ENCODE measurements at regions of chr2 and their contacts with region 1.

Region 1: GRCh38 chr2:188978291-188979081 is 4.3 kb downstream of the COL3A1 start:
- DNase-seq: no peak
- H3K4me3 Mint-ChIP-seq: peak overlapping the region; percentile 35
- H3K27ac Mint-ChIP-seq: peak overlapping the region; percentile 80
- H3K4me1 Mint-ChIP-seq: peaks cover 13% of the 10 kb centered on the region
- H3K27me3 Mint-ChIP-seq: peaks cover 4% of the 10 kb centered on the region

Region 2: DNA sequence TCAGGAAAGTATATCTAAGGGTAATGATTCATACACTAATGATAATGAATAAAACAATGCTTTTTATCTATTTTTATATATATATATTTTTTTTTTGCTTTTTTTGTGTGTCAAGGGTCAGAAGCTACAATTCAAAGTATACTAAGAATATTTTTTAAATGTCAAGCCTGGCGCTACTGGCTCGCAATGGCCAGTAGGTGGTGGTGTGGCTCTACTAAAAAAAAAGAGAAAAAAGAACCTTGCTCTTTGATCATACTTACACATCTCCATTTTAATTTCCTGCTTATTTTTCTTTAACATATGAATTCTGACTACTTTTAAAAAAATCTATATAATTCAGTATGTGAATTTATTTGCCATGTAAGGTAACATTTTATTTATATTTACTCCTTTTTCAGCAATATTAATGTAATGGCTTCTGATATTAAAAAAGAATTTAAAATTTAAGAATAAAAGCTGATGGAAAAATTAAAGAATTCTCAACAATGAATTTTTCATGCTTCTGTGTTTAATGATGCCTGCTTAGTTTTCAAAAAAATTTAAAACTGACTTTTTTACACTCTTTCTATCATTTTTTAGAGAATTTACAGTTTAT is 453.9 kb before region 1 on chr2:
- CTCF ChIA-PET with region 1: interaction called, 18 read pairs
- POLR2A ChIA-PET with region 1: no interaction called
- intact Hi-C with region 1: loop called (anchors 2 kb)
- DNase-seq: peak; percentile 22
- H3K4me3 Mint-ChIP-seq: no peak overlapping the region
- H3K27ac Mint-ChIP-seq: no peak overlapping the region
- H3K4me1 Mint-ChIP-seq: no peaks in the 10 kb centered on the region
- H3K27me3 Mint-ChIP-seq: peaks cover 3% of the 10 kb centered on the region

Region 3: DNA sequence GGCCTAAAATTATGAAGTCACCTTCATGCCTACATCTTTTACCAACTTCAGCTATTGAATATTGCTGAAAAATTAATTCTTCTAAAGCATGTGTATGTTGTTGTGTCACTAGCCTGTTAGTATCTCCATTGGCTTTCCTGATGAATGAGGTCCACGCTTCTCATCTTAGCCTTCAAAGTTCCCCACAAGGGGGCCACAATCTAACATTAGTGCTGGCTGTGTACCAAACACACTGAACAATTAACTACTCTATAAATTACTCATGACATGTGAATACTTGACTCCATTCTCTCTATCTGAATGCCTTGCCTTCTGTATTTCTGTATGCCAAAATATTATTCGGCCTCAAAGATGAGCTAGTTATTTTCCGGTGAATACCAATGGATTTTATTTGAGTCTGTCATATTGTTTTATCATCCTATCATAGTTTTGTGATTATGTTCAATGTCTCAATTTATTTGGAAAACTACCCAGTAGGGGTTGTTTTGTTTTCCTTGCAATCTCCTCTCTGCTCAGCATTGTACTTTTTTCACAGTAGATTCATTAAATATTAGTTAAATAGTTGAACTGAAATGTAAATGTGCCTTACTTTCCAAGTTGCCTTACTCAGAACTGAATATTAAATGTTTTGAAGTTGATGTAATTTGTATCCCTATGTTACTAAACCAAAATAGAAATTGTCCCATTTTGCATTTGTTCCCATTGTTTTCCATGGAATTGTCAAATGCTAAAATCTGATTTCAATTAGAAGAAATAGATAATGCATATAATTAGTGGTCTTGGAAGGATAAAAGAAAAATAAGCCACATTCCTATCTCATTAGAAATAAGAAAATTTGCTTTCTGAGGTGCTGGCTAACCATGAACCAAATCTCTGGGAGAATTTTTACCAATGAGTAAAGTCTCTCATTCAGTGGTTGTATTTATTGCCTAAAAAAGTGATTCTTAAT is 212.7 kb before region 1 on chr2:
- CTCF ChIA-PET with region 1: no interaction called
- POLR2A ChIA-PET with region 1: no interaction called
- intact Hi-C with region 1: loop called (anchors 5 kb)
- DNase-seq: no peak
- H3K4me3 Mint-ChIP-seq: no peak overlapping the region
- H3K27ac Mint-ChIP-seq: no peak overlapping the region
- H3K4me1 Mint-ChIP-seq: no peaks in the 10 kb centered on the region
- H3K27me3 Mint-ChIP-seq: no peaks in the 10 kb centered on the region

Region 4: GRCh38 chr2:188870289-188870688 is 108.2 kb before region 1 on chr2:
- CTCF ChIA-PET with region 1: no interaction called
- POLR2A ChIA-PET with region 1: no interaction called
- intact Hi-C with region 1: loop called (anchors 1 kb)
- DNase-seq: no peak
- H3K4me3 Mint-ChIP-seq: no peak overlapping the region
- H3K27ac Mint-ChIP-seq: no peak overlapping the region
- H3K4me1 Mint-ChIP-seq: peaks cover 4% of the 10 kb centered on the region
- H3K27me3 Mint-ChIP-seq: no peaks in the 10 kb centered on the region

Region 5: GRCh38 chr2:188956961-188957360 is 21.5 kb before region 1 on chr2:
- CTCF ChIA-PET with region 1: no interaction called
- POLR2A ChIA-PET with region 1: no interaction called
- intact Hi-C with region 1: loop called (anchors 1 kb)
- DNase-seq: no peak
- H3K4me3 Mint-ChIP-seq: no peak overlapping the region
- H3K27ac Mint-ChIP-seq: no peak overlapping the region
- H3K4me1 Mint-ChIP-seq: peaks cover 4% of the 10 kb centered on the region
- H3K27me3 Mint-ChIP-seq: peaks cover 3% of the 10 kb centered on the region

Region 6: DNA sequence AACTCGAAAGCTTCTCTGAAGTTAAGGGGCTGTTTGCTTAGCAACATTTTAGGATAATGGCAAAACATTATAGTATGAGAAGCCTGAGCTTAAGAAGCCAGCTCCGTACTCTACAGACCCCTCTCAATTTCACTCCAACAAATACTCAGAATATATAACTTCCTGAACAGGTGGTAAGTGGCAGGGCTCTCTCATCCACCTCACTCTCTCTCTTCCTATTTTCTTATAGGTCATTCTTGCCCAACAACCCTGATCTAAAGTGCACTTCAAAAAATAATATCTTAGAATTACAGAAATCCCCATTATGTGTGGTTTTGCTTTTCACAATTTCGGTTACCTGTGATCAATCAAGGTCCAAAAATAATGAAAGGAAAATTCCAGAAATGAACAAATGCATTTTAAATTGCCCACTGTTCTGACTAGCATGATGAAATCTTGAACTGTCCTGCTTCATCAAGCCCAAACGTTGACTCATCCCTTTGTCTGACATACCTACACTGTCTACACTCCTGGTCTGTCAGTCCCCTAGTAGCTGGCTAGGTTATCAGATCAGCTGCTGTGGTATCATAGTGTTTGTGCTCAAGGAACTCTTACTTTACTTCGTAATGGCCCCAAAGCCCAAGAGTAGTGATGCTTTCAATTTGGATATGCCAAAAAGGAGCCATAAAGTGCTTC is 323.9 kb after region 1 on chr2:
- CTCF ChIA-PET with region 1: no interaction called
- POLR2A ChIA-PET with region 1: no interaction called
- intact Hi-C with region 1: loop called (anchors 5 kb)
- DNase-seq: no peak
- H3K4me3 Mint-ChIP-seq: peak overlapping the region; percentile 0
- H3K27ac Mint-ChIP-seq: peak overlapping the region; percentile 83
- H3K4me1 Mint-ChIP-seq: peaks cover 72% of the 10 kb centered on the region
- H3K27me3 Mint-ChIP-seq: no peaks in the 10 kb centered on the region